ENCODE measurements at regions of chr1 and their contacts with region 1.

Region 1: DNA sequence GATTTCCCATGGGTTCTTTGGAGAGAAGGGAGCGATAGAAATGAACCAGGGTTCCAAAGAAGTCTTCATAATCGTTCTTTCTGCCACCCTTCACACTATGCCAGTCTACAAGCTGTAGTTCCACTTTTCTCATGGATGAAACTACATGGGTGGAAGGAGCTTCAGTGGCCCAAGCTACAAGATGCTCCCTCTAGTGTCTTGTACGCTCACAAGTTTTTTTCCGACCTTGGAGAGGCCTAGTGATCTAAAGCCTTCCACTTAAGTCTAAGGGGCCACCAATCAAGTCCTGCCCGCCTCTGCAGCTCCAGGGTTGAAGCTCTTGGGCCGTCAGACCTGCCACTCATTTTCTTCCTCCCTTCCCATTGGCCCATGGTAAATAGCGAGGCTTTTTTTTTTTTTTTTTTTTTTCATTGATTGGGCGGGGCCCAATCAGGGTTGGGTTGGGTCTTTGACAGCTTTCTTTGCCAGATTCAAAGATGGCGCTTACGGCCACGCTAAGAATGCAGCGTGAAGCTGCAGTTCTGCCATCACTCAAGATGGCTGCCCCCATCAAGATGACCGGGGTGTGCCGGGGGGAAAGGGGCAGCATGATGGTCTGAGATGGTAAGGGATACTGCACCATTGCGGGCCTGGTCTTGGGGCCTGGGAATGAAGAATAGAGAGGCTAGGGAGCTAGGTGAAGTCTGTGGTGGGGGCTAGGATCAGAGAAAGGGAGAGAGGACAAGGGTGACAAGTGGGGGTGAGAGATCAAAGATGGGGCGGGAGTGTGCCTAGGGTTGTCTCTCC is at the start of gene TOMM40L:
- DNase-seq: peak; percentile 77 to 94
- H3K4me3 ChIP-seq: peak within 1 kb of the TSS; percentile 62 to 83 (median 67)
- H3K27ac ChIP-seq: peak within 1 kb of the TSS; percentile 61 to 64
- H3K4me1 ChIP-seq: peaks cover 0 to 7% of the 10 kb centered on the region in 2 donors
- H3K27me3 ChIP-seq: no peaks in the 10 kb centered on the region
- CTCF ChIP-seq: peak in 2 of 3 donors; percentile 35 to 50
- POLR2A ChIP-seq: no peak
- total RNA-seq, gene TOMM40L: 6.9 to 9.4 (median 8.2) TPM

Region 2: DNA sequence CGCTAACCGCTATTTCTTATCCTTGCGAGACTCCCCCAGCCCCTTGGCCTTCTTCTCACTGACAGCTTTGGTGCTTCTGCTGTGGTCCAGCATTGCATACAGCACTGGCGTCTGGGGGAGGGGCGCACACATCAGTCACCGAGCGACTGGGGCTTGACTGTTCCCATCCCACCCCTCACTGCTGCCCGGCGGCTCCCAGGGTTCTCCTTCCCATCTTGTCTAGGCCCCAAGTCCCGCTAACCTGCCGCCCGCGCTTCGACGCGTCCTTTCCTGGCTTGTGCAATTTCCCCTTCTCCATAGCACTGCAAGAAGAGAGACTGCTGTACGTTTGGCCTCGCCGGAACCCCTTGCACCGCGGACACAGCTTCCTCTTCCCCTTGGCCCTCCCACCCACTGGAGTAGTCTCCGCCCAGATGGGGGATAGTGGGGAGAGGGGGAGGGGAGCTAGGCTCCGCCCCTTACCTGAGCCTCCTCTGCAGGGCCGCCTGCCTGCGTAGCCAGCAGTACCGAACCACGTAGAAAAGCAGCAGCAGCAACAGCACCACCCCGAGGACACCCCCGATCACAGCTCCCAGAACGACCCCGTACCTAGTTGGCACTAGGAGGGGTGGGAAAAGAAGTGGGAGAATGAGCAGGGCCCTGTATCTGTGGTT is 80.3 kb after region 1 on chr1:
- intact Hi-C with region 1: loop called (anchors 2 kb)
- DNase-seq: peak; percentile 74 to 75
- H3K4me3 ChIP-seq: peak overlapping the region; percentile 57 to 88 (median 82)
- H3K27ac ChIP-seq: peak overlapping the region; percentile 69 to 80
- H3K4me1 ChIP-seq: peaks cover 2 to 6% of the 10 kb centered on the region in 2 donors
- H3K27me3 ChIP-seq: no peaks in the 10 kb centered on the region
- CTCF ChIP-seq: no peak
- POLR2A ChIP-seq: no peak

Region 3: GRCh38 chr1:161389691-161390558 is 164.2 kb after region 1 on chr1:
- intact Hi-C with region 1: loop called (anchors 10 kb)
- DNase-seq: peak; percentile 96 to 98
- H3K4me3 ChIP-seq: peak overlapping the region; percentile 48 to 75 (median 75)
- H3K27ac ChIP-seq: peak overlapping the region; percentile 96 to 98
- H3K4me1 ChIP-seq: no peaks in the 10 kb centered on the region
- H3K27me3 ChIP-seq: no peaks in the 10 kb centered on the region
- CTCF ChIP-seq: no peak
- POLR2A ChIP-seq: peak; percentile 90

Measured in breast epithelium (tissue), 4 donors.